OCI-LY7 (cell line): ENCODE measurements at regions of chr22 and their contacts with region 1.

Region 1: DNA sequence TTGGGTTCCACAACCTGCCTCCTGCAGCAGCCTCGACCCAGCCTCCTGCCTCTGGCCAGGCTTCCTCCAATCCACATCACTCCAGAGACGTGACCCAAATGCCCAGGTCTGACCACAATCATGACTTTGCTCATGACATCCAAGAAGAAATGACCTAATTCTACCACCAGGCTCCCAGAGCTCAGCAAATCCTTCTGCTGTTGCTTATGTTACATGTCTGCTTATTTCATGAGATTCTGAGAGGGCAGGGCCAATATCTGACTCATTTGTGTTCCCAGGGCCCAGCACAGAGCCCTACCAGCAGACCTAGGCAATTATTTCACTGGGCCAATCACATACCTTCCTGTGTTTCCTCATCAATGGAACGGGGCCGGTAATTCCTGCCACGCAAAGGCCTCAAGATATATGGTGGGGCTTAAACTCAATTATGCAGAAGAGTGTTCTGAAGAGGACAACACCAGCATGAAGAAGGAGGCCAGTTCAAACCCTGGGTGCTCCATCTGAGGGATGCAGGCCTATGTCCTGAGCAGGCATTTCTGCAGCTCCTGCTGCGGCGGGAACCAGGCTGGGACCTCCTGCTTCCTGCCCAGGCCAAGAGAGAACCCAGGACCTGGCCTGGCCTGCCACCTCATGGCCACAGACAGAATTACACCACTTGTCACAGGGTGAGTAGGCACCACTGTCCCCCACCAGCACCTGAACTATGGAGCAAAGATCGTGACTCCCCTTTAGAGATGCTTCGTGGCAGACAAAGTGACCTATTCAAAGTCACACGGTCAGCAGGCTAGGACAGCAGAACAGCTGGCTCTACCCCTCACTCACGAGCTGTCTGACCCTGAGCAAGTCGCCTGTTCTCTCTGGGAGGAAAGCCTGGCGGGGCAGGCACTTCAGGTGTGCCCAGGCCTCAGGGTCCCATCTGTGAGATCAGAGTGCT is 5.9 kb downstream of the CENPM start:
- DNase-seq: peak; percentile 85
- H3K4me3 ChIP-seq: peak overlapping the region; percentile 52
- H3K27ac ChIP-seq: peak overlapping the region; percentile 91
- H3K4me1 ChIP-seq: peaks cover 83% of the 10 kb centered on the region
- CTCF ChIP-seq: peak; percentile 92

Region 2: DNA sequence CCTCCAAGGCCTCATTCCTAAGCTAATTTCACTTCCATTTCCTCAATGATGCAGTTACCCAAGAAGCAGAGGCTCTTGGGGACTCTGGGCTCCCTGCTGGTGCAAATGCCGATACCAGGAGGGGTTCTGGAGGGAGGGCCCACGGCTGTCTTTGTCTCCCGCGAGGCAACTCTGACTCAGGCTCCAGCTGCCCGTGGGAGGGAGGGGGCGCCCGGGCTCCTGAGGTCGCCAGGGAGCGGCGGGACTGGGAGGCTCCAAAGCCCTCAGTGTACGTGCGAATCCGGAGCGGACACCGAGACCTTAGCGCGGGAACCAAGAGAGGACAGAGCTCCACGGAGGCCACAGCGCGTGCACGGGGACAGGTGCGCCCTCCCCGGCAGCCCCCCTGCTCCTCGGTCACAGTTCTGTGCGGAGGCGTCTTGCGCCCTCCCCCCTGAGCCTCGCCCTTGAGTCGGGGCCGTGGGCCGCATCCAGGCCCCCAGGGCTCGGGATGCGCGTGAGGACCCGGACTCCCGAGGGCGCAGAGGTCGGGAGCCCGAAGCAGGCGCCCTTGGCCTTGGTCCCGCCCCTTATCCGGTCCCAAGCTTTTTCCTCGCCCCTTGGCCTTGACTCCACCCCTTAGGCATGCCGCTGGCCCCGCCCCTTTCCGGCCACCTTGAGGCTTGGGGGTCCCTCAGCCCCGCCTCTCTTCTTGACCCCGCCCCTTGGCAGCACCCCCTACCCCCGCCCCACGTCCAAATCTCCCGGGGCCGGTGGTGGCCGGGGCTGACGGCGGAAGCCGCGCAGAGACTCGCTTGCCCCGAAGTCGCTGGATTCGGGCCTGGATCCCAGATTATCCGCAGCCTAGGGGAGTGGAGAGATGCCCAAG is 21.5 kb before region 1 on chr22:
- CTCF ChIA-PET with region 1: no interaction called
- POLR2A ChIA-PET with region 1: interaction called, 4 read pairs
- intact Hi-C with region 1: loop called (anchors 2 kb)
- DNase-seq: peak; percentile 84
- H3K4me3 ChIP-seq: peak overlapping the region; percentile 59
- H3K27ac ChIP-seq: peak overlapping the region; percentile 88
- H3K4me1 ChIP-seq: peaks cover 81% of the 10 kb centered on the region
- CTCF ChIP-seq: 0 out of 2 replicates have a peak, but pooled peaks have one; percentile 15